ENCODE measurements at regions of chr12 and their contacts with region 1.

Region 1: GRCh38 chr12:68610370-68611093 is at the start of gene RAP1B:
- DNase-seq: peak; percentile 73
- H3K4me3 ChIP-seq: peak within 1 kb of the TSS; percentile 61 to 96 (median 90)
- H3K27ac ChIP-seq: peak within 1 kb of the TSS; percentile 95 to 100 (median 99)
- H3K4me1 ChIP-seq: peaks cover 10 to 49% (median 31%) of the 10 kb centered on the region in 3 donors
- H3K27me3 ChIP-seq: no peaks in the 10 kb centered on the region
- CTCF ChIP-seq: no peak
- POLR2A ChIP-seq: peak in 2 of 4 donors; percentile 96 to 99
- total RNA-seq, gene RAP1B: 66.9 to 133 (median 120) TPM

Region 2: GRCh38 chr12:68364893-68365725 is 245.4 kb before region 1 on chr12:
- intact Hi-C with region 1: loop called (anchors 10 kb)
- DNase-seq: peak; percentile 66
- H3K4me3 ChIP-seq: peak overlapping the region; percentile 9 to 59 (median 30)
- H3K27ac ChIP-seq: peak overlapping the region; percentile 68 to 88 (median 76)
- H3K4me1 ChIP-seq: peaks cover 0 to 29% (median 12%) of the 10 kb centered on the region in 3 donors
- H3K27me3 ChIP-seq: no peaks in the 10 kb centered on the region
- CTCF ChIP-seq: no peak
- POLR2A ChIP-seq: peak in 2 of 4 donors; percentile 25 to 65

Region 3: DNA sequence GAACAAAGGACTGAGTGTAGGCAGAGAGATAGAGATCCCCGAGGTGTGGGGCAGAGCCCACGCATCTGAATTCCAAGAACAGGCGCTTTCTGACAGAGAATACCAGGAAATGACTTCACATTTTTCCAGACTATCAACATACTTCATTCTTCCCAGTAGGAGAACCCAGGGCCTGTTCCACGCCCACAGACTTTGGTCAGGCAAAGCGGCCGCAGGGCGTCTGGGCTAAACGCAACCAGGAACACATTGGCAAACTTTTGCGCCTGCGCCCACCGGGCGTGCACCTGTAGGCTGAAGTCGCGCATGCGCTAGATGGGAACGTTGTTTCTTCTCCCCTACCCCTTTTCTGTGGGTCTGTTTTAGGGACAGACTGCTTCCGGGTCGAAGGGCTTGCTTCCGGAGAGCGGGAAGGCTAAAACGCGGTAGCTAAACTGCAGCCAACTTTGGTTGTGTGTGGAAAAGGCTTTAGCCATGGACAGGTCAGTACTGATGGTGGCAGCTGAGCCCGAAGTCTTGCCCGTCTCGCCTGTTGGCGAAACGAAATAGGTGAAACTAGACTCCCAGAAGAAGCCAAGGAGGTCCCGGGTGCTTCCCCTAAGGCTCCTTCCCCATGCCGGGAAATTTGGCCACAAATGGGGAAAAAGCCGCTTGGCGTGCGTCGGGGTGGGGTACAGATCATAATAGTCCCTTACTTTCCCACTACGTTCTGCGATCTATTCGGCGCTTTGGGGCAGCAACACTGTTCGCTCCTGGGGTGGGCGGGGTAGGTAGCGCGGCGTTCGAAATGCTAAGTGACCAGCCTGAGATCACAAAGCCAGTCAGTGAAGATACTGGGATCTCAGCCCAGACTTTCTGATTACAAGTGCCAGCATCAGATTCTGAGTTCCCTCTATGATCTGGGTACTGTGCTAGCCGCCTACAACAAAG is 76.3 kb after region 1 on chr12 and contains the start of gene NUP107:
- intact Hi-C with region 1: loop called (anchors 10 kb)
- DNase-seq: peak; percentile 87
- H3K4me3 ChIP-seq: peak within 1 kb of the TSS; percentile 74 to 95 (median 86)
- H3K27ac ChIP-seq: peak within 1 kb of the TSS; percentile 78 to 89 (median 81)
- H3K4me1 ChIP-seq: peaks cover 5 to 27% (median 6%) of the 10 kb centered on the region in 3 donors
- H3K27me3 ChIP-seq: no peaks in the 10 kb centered on the region
- CTCF ChIP-seq: peak in 3 of 6 experiments; percentile 32 to 46 (median 34)
- POLR2A ChIP-seq: peak in 1 of 4 donors; percentile 48
- total RNA-seq, gene NUP107: 14.2 to 48.4 (median 36.2) TPM

Measured in esophagus squamous epithelium (tissue), 5 donors.